H1 (cell line): ENCODE measurements at regions of chr2 and their contacts with region 1.

Region 1: DNA sequence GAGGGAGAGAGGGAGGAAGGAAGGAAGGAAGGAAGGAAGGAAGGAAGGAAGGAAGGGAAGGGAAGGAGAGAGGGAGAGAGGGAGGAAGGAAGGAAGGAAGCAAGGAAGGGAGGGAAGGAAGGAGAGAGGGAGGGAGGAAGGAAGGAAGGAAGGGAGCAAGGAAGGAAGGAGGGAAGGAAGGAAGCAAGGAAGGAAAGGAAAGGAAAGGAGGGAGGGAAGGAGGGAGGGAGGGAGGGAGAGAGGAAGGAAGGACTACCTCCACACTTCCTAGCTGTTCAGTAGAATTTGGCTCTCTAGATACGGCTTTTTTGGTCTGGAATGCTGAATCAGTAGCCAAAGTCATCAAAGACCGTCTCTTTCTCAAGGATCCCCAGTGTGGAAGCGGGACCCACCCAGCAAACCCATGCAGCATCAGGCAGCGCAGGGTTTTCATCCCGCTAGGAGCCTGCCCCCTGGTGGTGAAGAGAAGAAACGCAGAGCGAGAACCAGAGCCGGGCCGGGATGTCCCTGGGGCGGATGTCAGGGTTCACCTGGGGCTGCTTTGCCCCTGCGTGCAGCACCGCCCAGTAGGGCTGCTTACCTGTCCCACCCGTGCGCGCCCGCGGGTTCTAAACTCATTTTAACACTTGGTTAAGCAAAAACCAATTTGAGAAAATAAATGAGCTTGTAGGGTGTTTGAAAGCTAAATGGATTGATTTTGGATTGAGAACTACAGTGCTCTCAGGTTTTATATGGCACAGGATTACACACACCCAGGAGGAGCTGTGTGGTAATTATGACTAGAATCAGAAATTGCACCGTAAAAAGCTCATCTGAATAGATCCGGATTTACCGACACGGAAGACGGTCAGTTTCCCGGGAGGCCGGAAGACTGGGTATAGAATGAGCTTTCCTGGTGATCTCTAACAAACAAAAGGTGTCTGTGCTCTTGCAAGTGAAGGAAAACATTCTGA is 48.1 kb upstream of the ARL4C start:
- DNase-seq: peak; percentile 29 to 95
- H3K4me3 ChIP-seq: peak overlapping the region in 1 of 4 experiments; percentile 50; a peak in 4 of 8 replicates
- H3K27ac ChIP-seq: no peak overlapping the region
- H3K4me1 ChIP-seq: peaks cover 8 to 27% (median 12%) of the 10 kb centered on the region in 4 experiments; a peak in 6 of 7 replicates
- H3K27me3 ChIP-seq: peaks cover 0 to 6% (median 5%) of the 10 kb centered on the region in 4 experiments; a peak in 6 of 7 replicates
- CTCF ChIP-seq: peak; percentile 77 to 92 (median 87)
- EP300 ChIP-seq: no peak
- POLR2A ChIP-seq: no peak
- RAD21 ChIP-seq: peak; percentile 85 to 92

Region 2: GRCh38 chr2:234241656-234242458 is 303.1 kb before region 1 on chr2:
- CTCF ChIA-PET with region 1: no interaction called
- POLR2A ChIA-PET with region 1: no interaction called
- DNase-seq: no peak
- H3K4me3 ChIP-seq: no peak overlapping the region
- H3K27ac ChIP-seq: no peak overlapping the region
- H3K4me1 ChIP-seq: no peaks in the 10 kb centered on the region
- H3K27me3 ChIP-seq: no peaks in the 10 kb centered on the region
- CTCF ChIP-seq: no peak
- EP300 ChIP-seq: no peak
- POLR2A ChIP-seq: no peak
- RAD21 ChIP-seq: no peak

Region 3: GRCh38 chr2:234288974-234289455 is 255.9 kb before region 1 on chr2:
- CTCF ChIA-PET with region 1: interaction called, 11 read pairs
- POLR2A ChIA-PET with region 1: no interaction called
- DNase-seq: peak; percentile 41 to 95
- H3K4me3 ChIP-seq: no peak overlapping the region
- H3K27ac ChIP-seq: no peak overlapping the region
- H3K4me1 ChIP-seq: peaks cover 0 to 2% (median under 1%) of the 10 kb centered on the region in 4 experiments; a peak in 5 of 7 replicates
- H3K27me3 ChIP-seq: no peaks in the 10 kb centered on the region
- CTCF ChIP-seq: peak; percentile 90 to 97 (median 93)
- EP300 ChIP-seq: no peak; a peak in 1 of 3 replicates
- POLR2A ChIP-seq: no peak
- RAD21 ChIP-seq: peak; percentile 92 to 95

Region 4: GRCh38 chr2:234512884-234513669 is 31.9 kb before region 1 on chr2:
- CTCF ChIA-PET with region 1: interaction called, 11 read pairs
- POLR2A ChIA-PET with region 1: no interaction called
- DNase-seq: no peak
- H3K4me3 ChIP-seq: no peak overlapping the region
- H3K27ac ChIP-seq: no peak overlapping the region
- H3K4me1 ChIP-seq: no peaks in the 10 kb centered on the region
- H3K27me3 ChIP-seq: no peaks in the 10 kb centered on the region; a peak in 1 of 7 replicates
- CTCF ChIP-seq: no peak
- EP300 ChIP-seq: no peak
- POLR2A ChIP-seq: no peak
- RAD21 ChIP-seq: no peak

Region 5: GRCh38 chr2:234555720-234556119 is 10.8 kb after region 1 on chr2:
- CTCF ChIA-PET with region 1: interaction called, 16 read pairs
- POLR2A ChIA-PET with region 1: no interaction called
- DNase-seq: no peak
- H3K4me3 ChIP-seq: no peak overlapping the region
- H3K27ac ChIP-seq: no peak overlapping the region
- H3K4me1 ChIP-seq: peaks cover 0 to 4% (median 3%) of the 10 kb centered on the region in 4 experiments; a peak in 2 of 7 replicates
- H3K27me3 ChIP-seq: 0 out of 7 replicates have a peak, but pooled peaks cover 0 to 4% (median 0%) of the 10 kb centered on the region in 4 experiments
- CTCF ChIP-seq: no peak
- EP300 ChIP-seq: no peak
- POLR2A ChIP-seq: no peak
- RAD21 ChIP-seq: no peak

Region 6: GRCh38 chr2:235116885-235117492 is 572.1 kb after region 1 on chr2:
- CTCF ChIA-PET with region 1: interaction called, 15 read pairs
- POLR2A ChIA-PET with region 1: no interaction called
- DNase-seq: no peak
- H3K4me3 ChIP-seq: no peak overlapping the region
- H3K27ac ChIP-seq: no peak overlapping the region
- H3K4me1 ChIP-seq: no peaks in the 10 kb centered on the region; a peak in 1 of 7 replicates
- H3K27me3 ChIP-seq: no peaks in the 10 kb centered on the region; a peak in 3 of 7 replicates
- CTCF ChIP-seq: peak in 2 of 3 experiments; percentile 34 to 51; a peak in 2 of 4 replicates
- EP300 ChIP-seq: no peak
- POLR2A ChIP-seq: no peak
- RAD21 ChIP-seq: peak; percentile 71 to 75